Activated CD4-positive, alpha-beta T cell treated with anti-CD3 and anti-CD28 coated beads for 36 hours (primary cell): ENCODE measurements at regions of chr3 and their contacts with region 1.

Region 1: GRCh38 chr3:59386165-59386564 is 336.3 kb upstream of the CFAP20DC start:
- DNase-seq: no peak
- ATAC-seq: peak; percentile 28
- H3K4me3 Mint-ChIP-seq: peak overlapping the region; percentile 31
- H3K27ac Mint-ChIP-seq: peak overlapping the region; percentile 99
- H3K4me1 Mint-ChIP-seq: peaks cover 86% of the 10 kb centered on the region
- H3K27me3 Mint-ChIP-seq: no peaks in the 10 kb centered on the region

Region 2: DNA sequence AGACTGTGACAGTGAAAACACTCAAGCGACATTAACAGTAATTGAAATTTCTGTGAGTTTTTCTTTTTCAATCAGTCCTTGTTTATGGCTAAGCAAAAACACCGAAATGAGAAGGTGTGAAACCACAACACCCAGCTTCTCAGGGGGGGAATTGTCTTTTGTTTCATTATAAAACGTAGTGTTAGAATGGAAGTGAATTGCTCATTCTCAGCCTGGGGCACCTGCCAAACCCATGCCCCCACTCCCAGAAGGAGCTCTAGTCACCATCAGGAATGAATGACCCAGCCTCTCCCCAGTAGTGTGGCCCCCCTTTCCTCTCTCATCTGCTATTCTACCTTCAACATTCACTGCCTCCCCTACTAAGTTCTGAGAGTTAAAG is 150.5 kb before region 1 on chr3:
- CTCF ChIA-PET with region 1: no interaction called
- POLR2A ChIA-PET with region 1: no interaction called
- intact Hi-C with region 1: loop called (anchors 1 kb)
- DNase-seq: peak; percentile 65
- ATAC-seq: peak; percentile 91
- H3K4me3 Mint-ChIP-seq: no peak overlapping the region
- H3K27ac Mint-ChIP-seq: no peak overlapping the region
- H3K4me1 Mint-ChIP-seq: peaks cover 14% of the 10 kb centered on the region
- H3K27me3 Mint-ChIP-seq: peaks cover 7% of the 10 kb centered on the region

Region 3: DNA sequence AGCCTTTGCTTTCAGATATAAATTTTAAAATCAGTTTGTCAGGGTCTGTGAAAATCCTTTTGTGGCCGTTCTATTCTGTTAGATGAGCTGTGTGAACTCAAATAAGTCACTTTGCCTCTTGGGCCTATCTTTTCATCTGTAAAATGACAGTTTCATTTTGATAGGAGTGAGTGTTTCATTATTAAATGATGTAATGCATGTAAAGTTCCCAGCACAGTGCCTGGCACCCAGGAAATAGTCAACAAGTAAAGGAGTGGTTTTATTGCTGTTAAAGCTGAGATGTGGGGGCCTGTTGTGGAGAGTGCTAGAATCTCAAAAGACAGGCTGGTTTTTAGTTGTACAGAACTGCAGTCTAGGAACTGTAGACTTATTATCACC is 58.1 kb after region 1 on chr3:
- CTCF ChIA-PET with region 1: interaction called, 3 read pairs
- POLR2A ChIA-PET with region 1: no interaction called
- intact Hi-C with region 1: loop called in 1 of 2 experiments (anchors 1 kb)
- DNase-seq: peak; percentile 51
- ATAC-seq: peak; percentile 88
- H3K4me3 Mint-ChIP-seq: peak overlapping the region; percentile 55
- H3K27ac Mint-ChIP-seq: peak overlapping the region; percentile 93
- H3K4me1 Mint-ChIP-seq: peaks cover 58% of the 10 kb centered on the region
- H3K27me3 Mint-ChIP-seq: no peaks in the 10 kb centered on the region

Region 4: GRCh38 chr3:59502806-59503205 is 116.6 kb after region 1 on chr3:
- CTCF ChIA-PET with region 1: no interaction called
- POLR2A ChIA-PET with region 1: no interaction called
- intact Hi-C with region 1: loop called in 1 of 2 experiments (anchors 1 kb)
- DNase-seq: peak; percentile 71
- ATAC-seq: peak; percentile 97
- H3K4me3 Mint-ChIP-seq: no peak overlapping the region
- H3K27ac Mint-ChIP-seq: no peak overlapping the region
- H3K4me1 Mint-ChIP-seq: peaks cover 10% of the 10 kb centered on the region
- H3K27me3 Mint-ChIP-seq: no peaks in the 10 kb centered on the region

Region 5: GRCh38 chr3:59726279-59726678 is 340.1 kb after region 1 on chr3:
- CTCF ChIA-PET with region 1: no interaction called
- POLR2A ChIA-PET with region 1: no interaction called
- intact Hi-C with region 1: loop called in 1 of 2 experiments (anchors 1 kb)
- DNase-seq: peak; percentile 59
- ATAC-seq: peak; percentile 91
- H3K4me3 Mint-ChIP-seq: no peak overlapping the region
- H3K27ac Mint-ChIP-seq: no peak overlapping the region
- H3K4me1 Mint-ChIP-seq: peaks cover 20% of the 10 kb centered on the region
- H3K27me3 Mint-ChIP-seq: no peaks in the 10 kb centered on the region

Region 6: GRCh38 chr3:59935025-59935424 is 548.9 kb after region 1 on chr3:
- CTCF ChIA-PET with region 1: no interaction called
- POLR2A ChIA-PET with region 1: no interaction called
- intact Hi-C with region 1: loop called in 1 of 2 experiments (anchors 1 kb)
- DNase-seq: peak; percentile 38
- ATAC-seq: peak; percentile 96
- H3K4me3 Mint-ChIP-seq: peak overlapping the region; percentile 37
- H3K27ac Mint-ChIP-seq: peak overlapping the region; percentile 79
- H3K4me1 Mint-ChIP-seq: peaks cover 81% of the 10 kb centered on the region
- H3K27me3 Mint-ChIP-seq: no peaks in the 10 kb centered on the region